PC-9 (cell line): ENCODE measurements at regions of chr3 and their contacts with region 1.

Region 1: GRCh38 chr3:122564155-122564912 is at the starts of genes DTX3L and PARP9:
- DNase-seq: peak; percentile 64 to 82
- H3K4me3 ChIP-seq: peak within 1 kb of the TSS; percentile 85
- H3K27ac ChIP-seq: peak within 1 kb of the TSS; percentile 72
- H3K4me1 ChIP-seq: peaks cover 14% of the 10 kb centered on the region; the same call in 1 of the 2 replicates
- H3K27me3 ChIP-seq: no peaks in the 10 kb centered on the region
- CTCF ChIP-seq: no peak
- total RNA-seq, gene DTX3L: 30.0 and 41.7 TPM in 2 replicates
- total RNA-seq, gene PARP9: 15.0 and 21.1 TPM in 2 replicates

Region 2: DNA sequence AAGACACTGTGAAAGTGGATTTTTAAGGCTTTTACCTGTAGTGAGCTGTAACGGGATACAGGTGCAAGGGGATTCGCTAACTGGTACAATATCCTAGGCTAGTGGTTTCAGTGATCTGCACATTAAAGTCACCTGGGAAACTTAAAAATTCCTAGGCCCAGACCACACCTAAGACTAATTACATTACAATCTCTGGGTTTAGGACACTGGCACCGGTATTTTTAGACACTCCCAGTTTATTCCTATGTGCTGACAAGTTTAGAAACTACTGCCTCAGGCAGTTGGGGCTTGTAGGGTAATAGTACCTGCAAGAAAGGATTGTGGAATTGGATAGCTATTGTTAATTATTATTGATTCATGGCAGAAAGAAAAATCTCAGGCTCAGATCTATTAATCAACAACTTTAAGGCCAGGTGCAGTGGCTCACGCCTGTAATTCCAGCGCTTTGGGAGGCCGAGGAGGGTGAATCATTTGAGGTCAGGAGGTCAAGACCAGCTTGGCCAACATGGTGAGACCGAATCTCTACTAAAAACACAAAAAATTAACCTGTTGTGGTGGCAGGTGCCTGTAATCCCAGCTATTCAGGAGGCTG is 431.3 kb before region 1 on chr3:
- CTCF ChIA-PET with region 1: no interaction called
- POLR2A ChIA-PET with region 1: no interaction called
- intact Hi-C with region 1: no loop called
- DNase-seq: peak; percentile 2 to 46
- H3K4me3 ChIP-seq: no peak overlapping the region
- H3K27ac ChIP-seq: no peak overlapping the region
- H3K4me1 ChIP-seq: no peaks in the 10 kb centered on the region
- H3K27me3 ChIP-seq: no peaks in the 10 kb centered on the region
- CTCF ChIP-seq: no peak

Region 3: DNA sequence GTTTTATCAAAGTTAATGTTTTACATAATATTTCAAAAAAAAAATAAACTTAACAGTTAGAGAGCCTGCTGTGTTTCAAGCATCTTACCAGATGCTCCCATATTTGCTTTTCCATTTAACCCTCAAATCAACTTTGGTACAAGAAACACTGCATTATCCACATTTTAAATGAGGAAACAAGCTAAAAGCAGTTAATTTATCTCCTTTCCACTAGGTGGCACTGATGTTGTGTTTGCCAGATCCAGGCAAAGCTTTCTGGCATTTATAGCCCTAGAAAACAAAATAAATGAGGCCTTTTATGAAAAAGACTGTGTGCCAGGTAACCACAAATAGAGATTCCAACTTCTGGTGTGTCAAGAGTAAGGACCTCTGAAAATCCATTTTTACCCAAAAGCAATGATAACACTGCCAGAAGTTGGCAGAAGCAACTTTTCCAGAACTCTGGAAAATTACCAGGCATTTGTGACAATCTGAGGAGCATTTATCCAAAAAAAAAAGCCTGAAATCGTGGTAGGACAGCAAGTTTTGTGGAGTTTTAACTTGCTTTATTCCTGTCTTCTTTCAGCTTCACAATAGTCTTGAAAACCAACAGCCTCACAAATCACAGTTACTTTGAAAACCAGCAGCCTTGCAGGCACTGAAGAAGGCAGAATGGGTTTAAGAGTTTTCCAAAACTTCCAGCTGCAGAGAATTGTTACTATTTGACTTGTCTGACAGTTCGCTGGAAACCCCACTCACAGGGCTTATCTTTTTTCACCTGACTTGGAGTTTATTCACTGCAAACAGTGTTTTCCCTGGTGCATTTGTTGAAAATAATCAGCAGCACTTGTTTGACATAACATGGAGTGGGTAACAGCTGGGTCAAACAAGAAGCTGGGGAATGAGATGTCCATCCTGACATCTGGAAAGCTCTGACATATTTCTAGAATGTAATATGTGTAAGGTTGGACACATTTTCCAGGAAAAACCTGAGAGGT is 171.2 kb before region 1 on chr3:
- CTCF ChIA-PET with region 1: interaction called, 3 read pairs
- POLR2A ChIA-PET with region 1: no interaction called
- intact Hi-C with region 1: loop called (anchors 2 kb)
- DNase-seq: peak in 1 of 2 experiments; percentile 9
- H3K4me3 ChIP-seq: no peak overlapping the region
- H3K27ac ChIP-seq: no peak overlapping the region
- H3K4me1 ChIP-seq: no peaks in the 10 kb centered on the region
- H3K27me3 ChIP-seq: no peaks in the 10 kb centered on the region
- CTCF ChIP-seq: peak; percentile 91

Region 4: DNA sequence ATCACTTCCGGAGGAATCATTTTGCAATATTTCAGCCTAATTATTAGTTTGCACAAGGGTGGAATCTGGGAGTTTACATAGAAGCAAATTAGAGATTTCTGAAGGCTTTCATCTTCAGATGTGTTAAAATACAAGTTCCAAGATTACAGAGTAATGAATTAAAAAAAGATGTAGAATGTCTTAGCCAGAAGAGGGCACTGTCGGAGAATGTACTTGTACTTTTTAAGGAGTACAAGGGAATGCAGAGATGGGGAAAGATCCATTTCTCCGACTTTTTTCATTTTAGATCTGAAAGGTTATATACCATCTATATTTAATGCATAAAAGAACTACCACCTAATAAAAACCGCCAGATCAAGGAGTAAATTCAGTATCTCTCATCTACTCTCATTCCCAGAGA is 105.3 kb before region 1 on chr3:
- CTCF ChIA-PET with region 1: no interaction called
- POLR2A ChIA-PET with region 1: no interaction called
- intact Hi-C with region 1: loop called (anchors 5 kb)
- DNase-seq: no peak
- H3K4me3 ChIP-seq: no peak overlapping the region
- H3K27ac ChIP-seq: no peak overlapping the region
- H3K4me1 ChIP-seq: no peaks in the 10 kb centered on the region
- H3K27me3 ChIP-seq: no peaks in the 10 kb centered on the region
- CTCF ChIP-seq: peak; percentile 72

Region 5: DNA sequence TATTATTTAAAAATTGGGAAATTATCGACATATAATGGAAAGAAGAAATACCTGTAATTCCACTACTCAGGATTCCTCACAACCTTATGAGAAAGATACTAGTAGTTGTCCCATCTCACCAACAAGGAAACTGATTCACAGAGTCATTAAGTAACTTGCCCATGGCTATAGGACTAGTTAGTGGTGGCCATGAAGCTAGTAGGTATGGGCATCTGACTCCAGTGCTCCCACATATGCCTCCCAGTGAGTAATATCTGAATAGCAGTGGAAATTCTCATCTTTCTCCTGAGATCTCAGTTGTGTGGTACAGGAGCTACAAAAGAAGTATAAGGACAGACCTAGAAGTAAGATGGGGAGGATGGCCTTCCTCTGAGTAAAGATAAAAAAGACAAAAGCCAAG is 22.7 kb before region 1 on chr3:
- CTCF ChIA-PET with region 1: no interaction called
- POLR2A ChIA-PET with region 1: no interaction called
- intact Hi-C with region 1: no loop called
- DNase-seq: no peak
- H3K4me3 ChIP-seq: no peak overlapping the region
- H3K27ac ChIP-seq: no peak overlapping the region
- H3K4me1 ChIP-seq: no peaks in the 10 kb centered on the region
- H3K27me3 ChIP-seq: no peaks in the 10 kb centered on the region
- CTCF ChIP-seq: no peak

Region 6: GRCh38 chr3:122553171-122553570 is 11.2 kb before region 1 on chr3:
- CTCF ChIA-PET with region 1: interaction called, 16 read pairs
- POLR2A ChIA-PET with region 1: no interaction called
- intact Hi-C with region 1: no loop called
- DNase-seq: no peak
- H3K4me3 ChIP-seq: no peak overlapping the region
- H3K27ac ChIP-seq: no peak overlapping the region
- H3K4me1 ChIP-seq: no peaks in the 10 kb centered on the region
- H3K27me3 ChIP-seq: no peaks in the 10 kb centered on the region
- CTCF ChIP-seq: no peak

Region 7: GRCh38 chr3:122587572-122587971 is 23.2 kb after region 1 on chr3:
- CTCF ChIA-PET with region 1: no interaction called
- POLR2A ChIA-PET with region 1: interaction called, 12 read pairs
- intact Hi-C with region 1: no loop called
- DNase-seq: no peak
- H3K4me3 ChIP-seq: no peak overlapping the region
- H3K27ac ChIP-seq: no peak overlapping the region
- H3K4me1 ChIP-seq: no peaks in the 10 kb centered on the region
- H3K27me3 ChIP-seq: no peaks in the 10 kb centered on the region
- CTCF ChIP-seq: no peak

Region 8: DNA sequence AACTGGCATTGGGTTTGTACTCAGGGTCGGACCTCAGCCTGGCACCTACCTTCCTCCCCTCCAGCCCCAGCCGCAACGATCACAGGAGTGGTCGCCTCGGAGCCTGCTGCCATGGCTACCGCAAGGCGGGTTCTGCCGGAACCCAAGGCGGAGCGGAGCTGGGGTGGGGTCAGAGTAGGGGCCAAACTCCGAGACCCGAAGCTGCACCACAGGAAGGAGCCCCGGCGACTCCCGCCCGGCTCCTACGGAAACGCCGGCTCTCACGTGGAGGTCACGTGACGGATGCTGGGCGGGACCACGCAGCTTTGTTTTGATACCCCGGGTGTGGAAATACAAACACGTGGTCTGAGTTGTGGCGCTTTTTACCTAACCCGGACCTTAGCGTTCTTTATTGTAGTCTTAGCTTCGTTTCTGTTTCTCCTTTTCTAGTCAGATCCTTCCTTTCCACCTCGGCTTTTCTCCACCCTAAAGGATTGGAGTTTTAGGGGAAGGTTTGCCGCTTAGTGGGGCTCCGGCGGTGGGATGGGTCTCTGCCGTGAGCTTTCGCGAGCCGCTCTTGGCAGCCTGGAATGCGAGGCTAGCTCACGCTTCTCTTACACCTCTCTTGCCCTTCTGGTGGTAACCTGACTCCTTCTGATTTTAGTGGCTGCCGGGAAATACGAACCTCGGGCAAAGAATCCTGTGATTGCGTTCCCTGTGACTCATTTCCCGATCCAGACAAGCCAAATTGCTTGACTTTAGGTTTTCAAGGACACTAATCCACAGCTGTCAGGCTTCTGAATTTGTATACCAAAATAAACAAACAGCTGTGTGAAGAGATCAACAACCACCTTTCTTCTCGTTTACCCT is 229.5 kb after region 1 on chr3 and contains the start of gene HSPBAP1:
- CTCF ChIA-PET with region 1: no interaction called
- POLR2A ChIA-PET with region 1: interaction called, 7 read pairs
- intact Hi-C with region 1: loop called (anchors 5 kb)
- DNase-seq: peak; percentile 88 to 91
- H3K4me3 ChIP-seq: peak within 1 kb of the TSS; percentile 80
- H3K27ac ChIP-seq: peak within 1 kb of the TSS; percentile 92
- H3K4me1 ChIP-seq: peaks cover 28% of the 10 kb centered on the region
- H3K27me3 ChIP-seq: no peaks in the 10 kb centered on the region
- CTCF ChIP-seq: no peak
- total RNA-seq, gene HSPBAP1: 8.9 and 10.9 TPM in 2 replicates